ENCODE measurements at regions of chr6 and their contacts with region 1.

Region 1: DNA sequence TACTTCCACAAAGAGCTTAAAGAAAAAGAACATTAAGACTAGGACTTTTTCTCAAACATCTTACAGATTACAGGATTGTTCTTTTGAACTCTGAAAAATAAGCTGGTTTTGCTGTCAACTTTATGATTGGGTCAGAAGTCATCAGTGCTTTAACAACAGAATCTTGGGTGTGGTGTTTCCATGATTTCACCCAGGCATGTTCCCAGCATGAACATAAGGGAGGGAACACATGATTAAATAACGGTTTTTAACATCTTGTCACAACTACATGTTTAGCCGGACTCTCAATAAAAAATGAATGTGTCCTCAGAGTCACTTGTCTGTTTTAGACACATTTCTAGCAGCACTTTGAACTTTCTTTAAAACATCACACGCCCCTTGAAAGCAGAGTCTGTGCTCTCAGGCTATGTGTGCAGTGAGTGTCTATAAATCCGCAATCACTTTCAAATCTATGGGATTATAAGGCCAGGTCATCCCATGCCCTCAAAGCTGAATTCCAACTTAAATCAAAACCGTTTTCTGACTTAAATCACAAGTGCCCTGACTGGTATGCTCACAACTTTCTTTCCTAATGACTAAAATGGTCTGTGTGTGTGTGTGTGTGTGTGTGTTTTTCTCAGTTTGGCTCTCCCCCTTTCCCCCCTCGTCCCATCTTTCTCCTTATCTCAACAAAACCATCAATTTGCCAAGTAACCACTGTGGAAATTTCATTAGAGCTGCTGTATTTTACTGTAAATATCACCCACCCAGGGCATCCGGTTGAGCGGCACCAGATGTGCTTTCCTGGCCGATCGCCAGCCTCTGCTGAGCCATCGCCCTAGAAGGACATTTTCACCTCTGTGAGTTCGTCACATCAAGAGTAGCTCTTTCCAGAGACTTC is 216.8 kb upstream of the DTNBP1 start:
- DNase-seq: peak; percentile 73
- H3K4me3 Mint-ChIP-seq: peak overlapping the region; percentile 4
- H3K27ac Mint-ChIP-seq: peak overlapping the region; percentile 89
- H3K4me1 Mint-ChIP-seq: peaks cover 29% of the 10 kb centered on the region
- H3K27me3 Mint-ChIP-seq: no peaks in the 10 kb centered on the region

Region 2: GRCh38 chr6:15628499-15629131 is 251.0 kb before region 1 on chr6:
- intact Hi-C with region 1: no loop called
- DNase-seq: peak; percentile 74
- H3K4me3 Mint-ChIP-seq: peak overlapping the region; percentile 42
- H3K27ac Mint-ChIP-seq: no peak overlapping the region
- H3K4me1 Mint-ChIP-seq: peaks cover 20% of the 10 kb centered on the region
- H3K27me3 Mint-ChIP-seq: no peaks in the 10 kb centered on the region

Region 3: GRCh38 chr6:15698471-15698870 is 181.2 kb before region 1 on chr6:
- intact Hi-C with region 1: no loop called
- DNase-seq: no peak
- H3K4me3 Mint-ChIP-seq: no peak overlapping the region
- H3K27ac Mint-ChIP-seq: no peak overlapping the region
- H3K4me1 Mint-ChIP-seq: peaks cover 2% of the 10 kb centered on the region
- H3K27me3 Mint-ChIP-seq: peaks cover 10% of the 10 kb centered on the region

Region 4: DNA sequence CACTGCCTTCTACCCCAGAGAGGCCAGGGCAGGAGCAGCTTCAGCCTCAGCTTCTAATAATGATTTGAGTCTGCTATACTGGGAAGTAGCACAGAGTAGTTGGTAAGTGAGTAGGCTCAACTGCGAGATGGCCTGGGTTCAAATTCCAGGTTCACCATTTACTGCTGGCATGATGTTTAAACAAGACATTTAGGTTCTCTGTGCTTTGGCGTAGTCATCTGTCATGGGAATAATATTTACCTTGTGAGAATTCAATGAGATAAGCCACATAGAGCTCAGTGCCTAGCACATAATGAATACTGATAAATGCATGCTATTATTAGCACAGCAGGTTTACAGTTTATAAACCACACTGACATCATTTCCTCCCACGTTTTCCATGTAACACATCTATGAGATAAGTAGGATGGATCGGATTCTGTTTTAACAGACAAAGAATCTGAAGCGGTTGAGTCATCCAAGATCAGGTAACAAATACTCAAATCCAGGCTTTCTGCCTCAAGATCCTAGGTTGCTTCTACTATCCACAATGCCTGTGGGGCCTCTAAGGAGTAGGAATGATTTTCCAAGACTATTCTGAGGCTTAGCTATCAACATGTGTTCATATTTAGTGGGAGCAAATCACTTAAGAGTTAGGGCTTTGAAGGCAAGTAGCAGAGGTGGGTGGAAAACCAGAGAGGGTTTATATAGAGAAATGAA is 143.9 kb before region 1 on chr6:
- intact Hi-C with region 1: no loop called
- DNase-seq: peak; percentile 53
- H3K4me3 Mint-ChIP-seq: peak overlapping the region; percentile 68
- H3K27ac Mint-ChIP-seq: peak overlapping the region; percentile 81
- H3K4me1 Mint-ChIP-seq: peaks cover 35% of the 10 kb centered on the region
- H3K27me3 Mint-ChIP-seq: no peaks in the 10 kb centered on the region

Region 5: DNA sequence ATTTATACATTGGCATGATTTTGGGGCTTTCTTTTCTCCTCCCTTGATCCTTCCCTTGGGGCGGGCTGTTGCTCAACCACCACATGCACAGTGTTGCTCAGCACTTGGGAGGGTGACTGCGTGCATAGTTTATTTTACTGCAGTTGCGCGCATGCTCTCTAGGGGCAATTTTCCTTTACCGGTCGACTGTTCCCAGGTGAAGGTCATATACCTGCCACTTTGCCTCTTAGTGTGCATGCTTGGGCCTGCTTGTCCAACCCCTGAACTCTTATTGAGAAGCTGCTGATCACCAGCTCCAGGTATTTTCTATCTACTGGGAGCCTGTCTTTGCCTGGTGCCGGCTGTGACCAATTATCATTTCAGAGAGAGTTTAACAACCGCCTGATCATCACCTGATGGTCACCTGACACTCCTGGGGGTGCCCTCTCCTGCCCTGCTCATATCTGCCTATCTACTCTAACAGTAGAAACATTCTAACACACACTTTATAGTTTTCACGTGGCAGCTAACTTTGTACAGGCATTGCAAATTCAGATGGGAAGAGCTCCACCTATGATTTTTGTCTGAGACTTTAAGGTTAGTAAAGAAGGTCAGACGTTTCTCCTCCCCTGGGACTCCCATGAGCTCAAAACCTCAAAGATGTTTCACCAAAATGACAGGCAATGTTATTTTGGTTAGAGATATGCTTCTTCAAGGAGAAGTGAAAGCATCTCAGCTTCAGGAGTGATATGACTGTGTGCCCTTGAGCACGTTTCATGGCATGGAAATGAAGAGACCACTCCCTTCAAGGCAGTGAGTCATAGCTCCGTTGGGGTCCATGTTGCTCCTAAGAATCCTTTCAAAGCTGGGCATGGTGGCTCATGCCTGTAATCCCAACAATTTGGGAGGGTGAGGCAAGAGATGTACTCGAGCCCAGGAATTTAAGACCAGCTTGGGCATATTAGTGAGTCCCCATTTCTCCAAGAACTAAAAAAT is 21.8 kb after region 1 on chr6:
- intact Hi-C with region 1: loop called (anchors 1 kb)
- DNase-seq: peak; percentile 82
- H3K4me3 Mint-ChIP-seq: peak overlapping the region; percentile 70
- H3K27ac Mint-ChIP-seq: peak overlapping the region; percentile 94
- H3K4me1 Mint-ChIP-seq: peaks cover 29% of the 10 kb centered on the region
- H3K27me3 Mint-ChIP-seq: no peaks in the 10 kb centered on the region

Measured in activated CD4-positive, alpha-beta T cell treated with anti-CD3 and anti-CD28 coated beads, Interleukin-2, amount 10 ng/mL, durations not matched to agents 24 days and 14 days (primary cell).